SK-N-SH (cell line): ENCODE measurements at regions of chr2 and their contacts with region 1.

Region 1: GRCh38 chr2:26942543-26943295 is 27.7 kb upstream of the MAPRE3 start:
- DNase-seq: peak; percentile 90
- H3K4me3 ChIP-seq: no peak overlapping the region
- H3K27ac ChIP-seq: no peak overlapping the region
- H3K4me1 ChIP-seq: peaks cover 0 to 16% of the 10 kb centered on the region in 2 experiments; a peak in 1 of 4 replicates
- H3K27me3 ChIP-seq: peaks cover 38% of the 10 kb centered on the region; the same call in 1 of the 2 replicates
- CTCF ChIP-seq: peak; percentile 77
- EP300 ChIP-seq: no peak
- RAD21 ChIP-seq: peak; percentile 89

Region 2: GRCh38 chr2:26822877-26823276 is 119.8 kb before region 1 on chr2:
- CTCF ChIA-PET with region 1: interaction called, 23 read pairs
- POLR2A ChIA-PET with region 1: no interaction called
- DNase-seq: no peak
- H3K4me3 ChIP-seq: no peak overlapping the region
- H3K27ac ChIP-seq: no peak overlapping the region
- H3K4me1 ChIP-seq: no peaks in the 10 kb centered on the region
- H3K27me3 ChIP-seq: peaks cover 6% of the 10 kb centered on the region; the same call in 1 of the 2 replicates
- CTCF ChIP-seq: no peak
- EP300 ChIP-seq: no peak
- RAD21 ChIP-seq: no peak

Region 3: GRCh38 chr2:26911911-26912861 is 30.5 kb before region 1 on chr2:
- CTCF ChIA-PET with region 1: interaction called, 89 read pairs
- POLR2A ChIA-PET with region 1: no interaction called
- DNase-seq: peak; percentile 83
- H3K4me3 ChIP-seq: peak overlapping the region in 1 of 2 experiments; percentile 19; a peak in 1 of 4 replicates
- H3K27ac ChIP-seq: peak overlapping the region in 1 of 2 experiments; percentile 98; a peak in 2 of 4 replicates
- H3K4me1 ChIP-seq: peaks cover 3 to 45% of the 10 kb centered on the region in 2 experiments; a peak in 3 of 4 replicates
- H3K27me3 ChIP-seq: peaks cover 32% of the 10 kb centered on the region; the same call in 1 of the 2 replicates
- CTCF ChIP-seq: no peak
- EP300 ChIP-seq: peak in 1 of 2 experiments; percentile 86; a peak in 2 of 4 replicates
- RAD21 ChIP-seq: peak; percentile 13; the same call in 1 of the 2 replicates

Region 4: GRCh38 chr2:27042159-27042661 is 99.5 kb after region 1 on chr2:
- CTCF ChIA-PET with region 1: no interaction called
- POLR2A ChIA-PET with region 1: no interaction called
- DNase-seq: no peak
- H3K4me3 ChIP-seq: no peak overlapping the region
- H3K27ac ChIP-seq: no peak overlapping the region
- H3K4me1 ChIP-seq: peaks cover 0 to 7% of the 10 kb centered on the region in 2 experiments; a peak in 1 of 4 replicates
- H3K27me3 ChIP-seq: no peaks in the 10 kb centered on the region
- CTCF ChIP-seq: no peak
- EP300 ChIP-seq: no peak
- RAD21 ChIP-seq: no peak